ENCODE measurements at regions of chr5 and their contacts with region 1.

Region 1: GRCh38 chr5:149268928-149269557 is 2.6 kb upstream of the AFAP1L1 start:
- DNase-seq: peak; percentile 70
- H3K4me3 Mint-ChIP-seq: no peak overlapping the region
- H3K27ac Mint-ChIP-seq: no peak overlapping the region
- H3K4me1 Mint-ChIP-seq: peaks cover 6% of the 10 kb centered on the region
- H3K27me3 Mint-ChIP-seq: peaks cover 55% of the 10 kb centered on the region

Region 2: GRCh38 chr5:149141224-149141956 is 127.7 kb before region 1 on chr5 and contains the start of gene ABLIM3:
- intact Hi-C with region 1: loop called (anchors 1 kb)
- DNase-seq: peak; percentile 93
- H3K4me3 Mint-ChIP-seq: peak within 1 kb of the TSS; percentile 63
- H3K27ac Mint-ChIP-seq: no peak within 1 kb of the TSS
- H3K4me1 Mint-ChIP-seq: peaks cover 2% of the 10 kb centered on the region
- H3K27me3 Mint-ChIP-seq: peaks cover 39% of the 10 kb centered on the region
- total RNA-seq, gene ABLIM3: not detected in 2 replicates

Region 3: GRCh38 chr5:149254506-149254905 is 14.5 kb before region 1 on chr5:
- intact Hi-C with region 1: no loop called
- DNase-seq: no peak
- H3K4me3 Mint-ChIP-seq: no peak overlapping the region
- H3K27ac Mint-ChIP-seq: no peak overlapping the region
- H3K4me1 Mint-ChIP-seq: no peaks in the 10 kb centered on the region
- H3K27me3 Mint-ChIP-seq: peaks cover 12% of the 10 kb centered on the region

Region 4: GRCh38 chr5:149284501-149284900 is 15.5 kb after region 1 on chr5:
- intact Hi-C with region 1: no loop called
- DNase-seq: no peak
- H3K4me3 Mint-ChIP-seq: no peak overlapping the region
- H3K27ac Mint-ChIP-seq: no peak overlapping the region
- H3K4me1 Mint-ChIP-seq: no peaks in the 10 kb centered on the region
- H3K27me3 Mint-ChIP-seq: peaks cover 7% of the 10 kb centered on the region